HepG2 (cell line): ENCODE measurements at regions of chr10 and their contacts with region 1.

Region 1: DNA sequence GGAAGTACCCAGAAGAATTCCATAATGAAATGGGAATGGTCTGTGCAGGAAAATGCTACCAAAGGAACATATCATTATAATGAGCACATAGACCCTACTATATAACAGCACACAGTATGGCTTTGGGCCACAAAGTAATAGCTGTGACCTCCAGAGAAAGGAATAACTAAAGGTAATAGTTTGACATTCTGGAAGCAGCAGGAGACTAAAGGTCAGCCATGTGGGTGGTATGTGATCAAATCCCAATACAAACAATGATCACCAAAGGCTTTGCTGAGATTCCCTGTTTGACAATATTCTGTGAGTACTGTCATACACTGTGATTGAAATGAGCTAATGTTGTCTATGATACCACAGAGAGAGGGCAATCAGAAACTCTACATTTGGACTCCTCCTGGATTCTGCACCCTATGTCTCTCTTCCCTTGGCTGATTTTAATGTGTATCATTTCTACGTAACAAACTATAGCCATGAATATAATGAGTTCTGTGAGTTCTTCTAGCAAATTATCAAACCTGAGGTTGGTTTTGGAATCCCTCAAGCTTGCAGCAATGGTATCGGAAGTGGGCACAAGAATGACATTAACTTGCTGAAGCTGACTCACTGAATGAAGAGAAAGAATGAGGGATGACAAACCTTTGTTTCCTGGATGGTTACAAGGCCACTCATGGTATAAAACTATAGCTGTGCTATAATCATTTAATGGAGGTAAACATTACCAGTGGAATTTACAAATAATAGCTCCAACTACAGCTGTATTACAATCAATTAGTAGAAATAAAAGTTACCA is 99.6 kb downstream of the JMJD1C start:
- DNase-seq: peak; percentile 52
- ATAC-seq: peak; percentile 84
- H3K4me3 ChIP-seq: no peak overlapping the region
- H3K27ac ChIP-seq: no peak overlapping the region
- H3K4me1 ChIP-seq: peaks cover 29% of the 10 kb centered on the region
- H3K27me3 ChIP-seq: no peaks in the 10 kb centered on the region; a peak in 1 of 5 replicates
- CTCF ChIP-seq: no peak
- EP300 ChIP-seq: no peak
- POLR2A ChIP-seq: no peak
- RAD21 ChIP-seq: no peak

Region 2: GRCh38 chr10:63300801-63301200 is 65.4 kb before region 1 on chr10:
- CTCF ChIA-PET with region 1: no interaction called
- POLR2A ChIA-PET with region 1: no interaction called
- in situ Hi-C with region 1: no loop called
- intact Hi-C with region 1: loop called (anchors 10 kb)
- DNase-seq: no peak
- ATAC-seq: peak; percentile 41; the same call in 2 of the 3 replicates
- H3K4me3 ChIP-seq: no peak overlapping the region
- H3K27ac ChIP-seq: no peak overlapping the region
- H3K4me1 ChIP-seq: peaks cover 35% of the 10 kb centered on the region
- H3K27me3 ChIP-seq: no peaks in the 10 kb centered on the region
- CTCF ChIP-seq: no peak
- EP300 ChIP-seq: no peak
- POLR2A ChIP-seq: no peak
- RAD21 ChIP-seq: no peak